Activated CD4-positive, alpha-beta memory T cell treated with anti-CD3 and anti-CD28 coated beads for 36 hours (primary cell): ENCODE measurements at regions of chr3 and their contacts with region 1.

Region 1: DNA sequence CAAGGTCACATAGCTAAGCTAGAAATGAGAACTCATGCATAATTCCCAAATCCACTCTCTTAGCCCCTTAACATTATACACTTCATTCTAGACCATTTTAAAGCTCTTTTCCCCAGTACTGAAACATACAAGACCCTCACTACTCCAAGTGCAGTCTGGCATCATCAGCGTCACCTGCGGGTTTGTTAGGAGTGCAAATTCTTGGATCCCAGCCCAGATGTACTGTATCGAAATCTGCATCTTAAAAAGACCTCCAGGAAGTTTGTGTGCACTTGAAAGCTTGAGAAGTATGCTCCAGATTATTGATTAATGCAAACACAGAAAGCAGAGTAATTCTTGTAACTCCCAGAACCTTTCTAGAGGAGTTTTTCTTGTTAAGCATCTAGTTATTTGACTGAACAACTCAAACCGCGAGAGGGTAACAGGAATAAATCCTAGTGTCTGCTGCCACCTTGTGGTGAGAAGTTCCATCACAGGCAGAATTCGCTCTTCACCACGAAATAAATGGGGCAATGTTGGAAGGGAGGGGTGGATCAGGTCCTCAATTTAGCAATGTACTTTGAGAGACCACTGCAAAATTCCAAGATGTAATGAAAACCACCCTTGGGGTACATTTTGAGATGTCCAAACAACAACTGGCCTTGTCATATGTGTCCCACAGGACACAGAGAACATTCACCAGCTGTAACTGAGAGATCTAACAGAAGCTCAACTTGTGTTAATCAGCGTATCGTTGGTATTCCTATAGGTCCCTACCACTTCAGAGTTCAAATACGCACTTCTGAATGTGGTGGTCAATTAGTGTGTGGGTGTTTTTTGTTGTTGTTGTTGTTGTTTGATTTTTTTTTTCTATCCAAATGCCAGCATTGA is 583 bp upstream of the C3orf49 start:
- DNase-seq: peak; percentile 70
- H3K4me3 Mint-ChIP-seq: no peak overlapping the region
- H3K27ac Mint-ChIP-seq: no peak overlapping the region
- H3K4me1 Mint-ChIP-seq: no peaks in the 10 kb centered on the region
- H3K27me3 Mint-ChIP-seq: no peaks in the 10 kb centered on the region

Region 2: GRCh38 chr3:62201438-62202035 is 1617.0 kb before region 1 on chr3:
- CTCF ChIA-PET with region 1: no interaction called
- POLR2A ChIA-PET with region 1: no interaction called
- intact Hi-C with region 1: loop called (anchors 10 kb)
- DNase-seq: no peak
- H3K4me3 Mint-ChIP-seq: no peak overlapping the region
- H3K27ac Mint-ChIP-seq: no peak overlapping the region
- H3K4me1 Mint-ChIP-seq: no peaks in the 10 kb centered on the region
- H3K27me3 Mint-ChIP-seq: peaks cover 2% of the 10 kb centered on the region

Region 3: DNA sequence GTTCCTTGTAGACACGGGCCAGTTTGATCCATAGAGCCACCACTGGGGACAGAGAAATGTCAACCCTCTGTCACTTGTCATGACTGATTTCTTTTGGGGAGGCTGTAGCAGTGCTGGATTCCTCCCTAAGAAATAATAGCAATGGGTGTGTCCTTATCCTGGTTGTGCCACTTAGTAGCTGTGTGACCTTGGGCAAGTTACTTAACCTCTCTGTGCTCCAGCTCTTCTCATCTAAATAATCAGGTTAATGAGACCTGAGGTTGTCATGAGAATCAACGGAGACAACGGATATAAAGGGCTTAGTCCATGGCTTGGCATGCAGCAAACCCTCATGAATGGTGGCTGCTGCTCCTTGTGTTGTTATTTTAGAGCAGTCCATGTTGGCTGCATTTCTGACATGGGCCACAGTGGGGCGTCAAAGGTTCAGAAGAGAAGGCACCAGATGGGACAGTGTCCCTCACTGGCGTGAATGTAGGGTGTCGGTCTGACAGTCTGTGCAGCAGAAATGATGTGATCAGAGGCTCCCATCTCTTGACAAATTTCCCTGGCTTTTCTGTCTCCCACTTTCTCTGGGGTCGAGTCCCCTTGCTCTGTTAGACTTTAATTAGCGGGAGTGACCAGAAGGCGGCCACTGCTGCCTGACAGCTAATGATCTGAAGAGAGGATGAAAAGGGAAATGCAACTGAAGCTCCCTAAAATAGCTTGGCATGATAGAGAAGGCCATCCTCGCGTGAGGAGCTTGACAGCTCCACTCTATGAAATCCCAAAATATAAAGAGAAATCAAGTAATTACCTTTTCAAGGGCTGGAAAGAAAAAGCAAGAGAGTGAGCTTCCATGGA is 1152.7 kb before region 1 on chr3:
- CTCF ChIA-PET with region 1: no interaction called
- POLR2A ChIA-PET with region 1: no interaction called
- intact Hi-C with region 1: loop called (anchors 5 kb)
- DNase-seq: peak; percentile 52
- H3K4me3 Mint-ChIP-seq: no peak overlapping the region
- H3K27ac Mint-ChIP-seq: no peak overlapping the region
- H3K4me1 Mint-ChIP-seq: no peaks in the 10 kb centered on the region
- H3K27me3 Mint-ChIP-seq: peaks cover 1% of the 10 kb centered on the region

Region 4: DNA sequence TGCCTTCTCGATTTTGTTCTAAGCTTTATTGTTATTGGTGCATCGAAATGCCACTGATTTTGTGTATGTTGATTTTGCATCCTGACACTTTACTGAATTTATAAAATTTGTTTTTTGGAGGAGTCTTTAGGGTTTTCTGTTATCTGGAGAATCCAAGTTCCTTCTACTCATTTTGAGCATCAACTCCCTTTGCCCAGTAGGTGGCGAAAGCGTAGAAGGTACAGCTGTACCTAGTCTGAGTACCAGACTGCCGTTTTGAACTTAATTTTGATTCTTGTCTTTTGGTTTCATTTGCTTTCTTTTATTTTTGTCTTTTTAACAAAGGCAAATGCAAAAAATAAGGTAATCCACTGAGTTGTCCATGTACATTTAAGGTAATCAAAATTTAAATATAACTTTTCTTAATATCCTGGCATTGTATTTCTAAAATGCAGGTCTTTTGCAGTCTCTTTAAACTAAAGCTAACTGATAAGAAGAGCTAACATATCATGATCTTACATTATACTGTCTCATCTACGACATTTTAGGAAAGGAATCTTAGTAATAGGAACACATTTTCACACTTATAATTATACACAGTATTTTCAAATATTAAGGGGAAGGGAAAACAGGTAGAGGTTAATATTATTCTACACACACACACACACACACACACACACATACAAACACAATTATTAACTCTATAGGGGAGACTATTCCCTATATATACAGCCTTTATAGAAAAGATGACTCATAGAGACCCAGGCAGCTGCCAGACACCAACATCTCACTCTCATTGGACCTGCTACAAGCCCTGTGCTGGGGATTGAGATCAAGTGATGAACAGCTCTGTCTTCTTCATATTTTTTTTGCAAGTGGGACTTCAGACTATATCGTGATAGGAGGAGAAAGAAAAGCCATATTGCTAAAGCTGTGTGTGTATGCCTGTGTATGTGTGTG is 468.7 kb before region 1 on chr3:
- CTCF ChIA-PET with region 1: interaction called, 94 read pairs
- POLR2A ChIA-PET with region 1: no interaction called
- intact Hi-C with region 1: loop called (anchors 1 kb)
- DNase-seq: peak; percentile 50
- H3K4me3 Mint-ChIP-seq: no peak overlapping the region
- H3K27ac Mint-ChIP-seq: no peak overlapping the region
- H3K4me1 Mint-ChIP-seq: no peaks in the 10 kb centered on the region
- H3K27me3 Mint-ChIP-seq: peaks cover 23% of the 10 kb centered on the region

Region 5: DNA sequence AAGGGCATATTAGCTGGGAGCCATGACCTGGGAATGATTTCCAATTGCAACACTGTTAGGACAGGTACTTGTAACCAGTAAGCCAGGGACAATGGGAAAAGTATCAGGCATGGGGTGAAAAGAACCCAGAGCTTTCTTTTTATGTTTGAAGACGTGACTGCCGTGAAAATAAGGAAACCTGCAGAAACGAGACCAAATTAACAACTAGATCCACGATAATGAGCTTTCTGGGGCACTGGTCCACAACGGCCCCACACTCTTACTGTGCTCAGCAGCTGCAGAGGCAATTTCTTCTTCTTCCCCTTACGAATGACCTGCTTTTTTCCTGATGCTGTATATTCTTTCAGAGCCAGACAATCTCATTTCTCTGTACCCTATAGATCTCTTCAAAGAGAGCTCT is 12.0 kb after region 1 on chr3:
- CTCF ChIA-PET with region 1: interaction called, 10 read pairs
- POLR2A ChIA-PET with region 1: no interaction called
- intact Hi-C with region 1: no loop called
- DNase-seq: no peak
- H3K4me3 Mint-ChIP-seq: no peak overlapping the region
- H3K27ac Mint-ChIP-seq: no peak overlapping the region
- H3K4me1 Mint-ChIP-seq: no peaks in the 10 kb centered on the region
- H3K27me3 Mint-ChIP-seq: no peaks in the 10 kb centered on the region